B cell (primary cell): ENCODE measurements at regions of chr3 and their contacts with region 1.

Region 1: DNA sequence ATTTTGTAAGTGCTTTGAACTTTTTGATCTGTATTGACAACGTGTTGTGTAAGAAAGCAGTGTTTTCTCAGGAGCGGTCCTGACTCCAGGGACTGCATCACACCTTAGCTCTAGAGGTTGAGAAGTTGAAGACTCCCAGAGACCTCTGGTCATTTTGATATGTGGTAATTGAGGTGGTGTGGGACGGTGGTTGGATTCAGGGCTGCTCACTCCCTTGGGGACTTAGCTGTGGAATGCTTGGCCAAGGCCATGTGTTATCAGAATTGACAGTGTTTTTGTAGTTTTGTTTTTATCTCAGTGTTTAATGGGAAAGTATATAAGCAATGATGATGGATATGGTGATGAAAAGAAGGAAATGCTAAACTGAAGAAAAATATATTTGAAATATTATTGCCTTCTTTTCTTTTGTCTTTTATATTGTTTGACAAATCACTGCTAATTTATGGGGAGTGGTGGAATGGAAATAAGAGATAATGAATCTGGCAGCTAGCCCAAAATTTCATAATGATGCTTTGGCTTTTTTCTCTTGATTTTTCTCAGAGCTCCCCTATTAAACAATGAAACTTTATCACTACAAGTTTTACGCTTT is 16.0 kb downstream of the CMSS1 start:
- DNase-seq: no peak
- ATAC-seq: no peak
- H3K4me3 ChIP-seq: no peak overlapping the region
- H3K4me3 Mint-ChIP-seq: no peak overlapping the region
- H3K27ac ChIP-seq: no peak overlapping the region
- H3K27ac Mint-ChIP-seq: no peak overlapping the region
- H3K4me1 ChIP-seq: no peaks in the 10 kb centered on the region
- H3K4me1 Mint-ChIP-seq: no peaks in the 10 kb centered on the region
- H3K27me3 ChIP-seq: no peaks in the 10 kb centered on the region
- H3K27me3 Mint-ChIP-seq: no peaks in the 10 kb centered on the region
- CTCF ChIP-seq: no peak

Region 2: DNA sequence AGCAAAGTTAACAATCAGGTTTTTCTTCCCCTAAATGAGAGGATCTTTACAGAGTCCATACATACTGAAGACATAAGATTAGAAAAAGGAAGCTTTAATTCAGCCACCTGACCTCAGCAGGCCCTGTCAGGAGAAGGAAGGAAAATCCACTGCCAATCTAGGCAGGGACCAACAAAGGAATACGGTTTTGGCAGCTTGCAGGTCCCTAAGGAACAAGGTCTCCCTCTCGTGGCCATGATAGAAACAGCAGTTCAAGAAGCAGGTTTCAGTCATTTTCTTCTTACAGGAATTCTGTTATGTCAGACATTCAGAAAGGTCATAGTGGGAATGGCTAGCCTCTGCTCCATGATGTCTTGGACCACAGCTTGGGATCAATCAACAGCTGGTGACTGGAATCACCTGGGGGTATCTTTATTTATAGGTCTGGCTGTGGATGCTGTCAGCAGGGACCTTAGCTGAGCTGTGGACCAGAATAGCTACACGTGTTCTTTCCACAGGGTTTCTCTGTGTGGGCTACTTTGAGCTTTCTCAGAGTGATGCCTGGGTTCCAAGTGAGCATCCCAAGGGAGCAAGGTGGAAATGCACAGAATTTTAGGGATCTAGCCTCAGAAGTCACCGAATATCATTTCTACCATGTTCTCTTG is 25.4 kb before region 1 on chr3:
- CTCF ChIA-PET with region 1: interaction called, 12 read pairs
- POLR2A ChIA-PET with region 1: no interaction called
- intact Hi-C with region 1: no loop called
- DNase-seq: peak; percentile 64
- ATAC-seq: peak; percentile 41
- H3K4me3 ChIP-seq: no peak overlapping the region
- H3K4me3 Mint-ChIP-seq: no peak overlapping the region
- H3K27ac ChIP-seq: no peak overlapping the region
- H3K27ac Mint-ChIP-seq: no peak overlapping the region
- H3K4me1 ChIP-seq: no peaks in the 10 kb centered on the region
- H3K4me1 Mint-ChIP-seq: no peaks in the 10 kb centered on the region
- H3K27me3 ChIP-seq: no peaks in the 10 kb centered on the region
- H3K27me3 Mint-ChIP-seq: no peaks in the 10 kb centered on the region
- CTCF ChIP-seq: peak; percentile 90

Region 3: DNA sequence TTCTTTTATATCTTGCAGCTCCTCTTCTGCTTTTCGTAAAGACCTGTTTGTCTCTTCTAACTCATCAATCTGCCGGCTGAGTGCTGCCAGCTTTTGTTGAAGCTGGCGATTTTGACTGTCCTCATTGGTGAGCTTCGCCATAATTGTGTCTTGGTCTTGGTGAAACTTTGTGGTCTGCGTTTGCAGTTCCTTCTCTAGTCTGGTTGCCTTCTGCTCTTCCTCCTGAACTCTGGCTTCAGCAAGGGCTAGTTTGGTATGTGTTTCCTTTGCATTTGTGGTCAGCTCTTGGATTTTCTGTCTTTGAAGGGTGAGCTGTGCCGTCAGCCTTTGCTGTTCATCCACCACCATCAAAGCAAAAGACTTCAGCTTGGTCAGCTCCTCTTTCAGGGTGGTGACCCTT is 16.9 kb after region 1 on chr3:
- CTCF ChIA-PET with region 1: interaction called, 11 read pairs
- POLR2A ChIA-PET with region 1: no interaction called
- intact Hi-C with region 1: no loop called
- DNase-seq: no peak
- ATAC-seq: no peak
- H3K4me3 ChIP-seq: no peak overlapping the region
- H3K4me3 Mint-ChIP-seq: no peak overlapping the region
- H3K27ac ChIP-seq: no peak overlapping the region
- H3K27ac Mint-ChIP-seq: no peak overlapping the region
- H3K4me1 ChIP-seq: no peaks in the 10 kb centered on the region
- H3K4me1 Mint-ChIP-seq: peaks cover 4% of the 10 kb centered on the region
- H3K27me3 ChIP-seq: no peaks in the 10 kb centered on the region
- H3K27me3 Mint-ChIP-seq: no peaks in the 10 kb centered on the region
- CTCF ChIP-seq: no peak

Region 4: DNA sequence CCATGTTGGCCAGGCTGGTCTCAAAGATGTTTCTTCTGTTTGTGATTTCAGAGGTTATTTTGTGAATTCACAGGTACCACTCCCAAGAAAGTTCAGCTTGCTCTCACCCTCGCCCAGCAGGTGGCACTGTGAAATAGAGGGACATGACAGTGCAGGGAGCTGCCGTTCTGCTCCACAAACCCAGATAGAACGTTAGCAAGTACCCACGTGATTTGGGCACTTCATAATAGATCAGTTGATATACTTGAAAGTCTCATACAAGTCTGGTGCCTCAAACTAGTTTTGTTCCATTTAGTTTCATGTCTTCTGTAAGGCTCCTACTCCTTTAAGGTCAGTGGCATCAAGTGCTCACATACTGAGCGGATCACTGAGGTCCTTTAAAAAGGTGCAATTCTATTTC is 235.1 kb after region 1 on chr3:
- CTCF ChIA-PET with region 1: interaction called, 4 read pairs
- POLR2A ChIA-PET with region 1: interaction called, 5 read pairs
- intact Hi-C with region 1: loop called (anchors 5 kb)
- DNase-seq: peak; percentile 84
- ATAC-seq: peak; percentile 95
- H3K4me3 ChIP-seq: no peak overlapping the region
- H3K4me3 Mint-ChIP-seq: peak overlapping the region; percentile 53
- H3K27ac ChIP-seq: no peak overlapping the region
- H3K27ac Mint-ChIP-seq: peak overlapping the region; percentile 57
- H3K4me1 ChIP-seq: peaks cover 37% of the 10 kb centered on the region in 2 donors
- H3K4me1 Mint-ChIP-seq: peaks cover 42% of the 10 kb centered on the region
- H3K27me3 ChIP-seq: no peaks in the 10 kb centered on the region
- H3K27me3 Mint-ChIP-seq: no peaks in the 10 kb centered on the region
- CTCF ChIP-seq: peak; percentile 86

Region 5: DNA sequence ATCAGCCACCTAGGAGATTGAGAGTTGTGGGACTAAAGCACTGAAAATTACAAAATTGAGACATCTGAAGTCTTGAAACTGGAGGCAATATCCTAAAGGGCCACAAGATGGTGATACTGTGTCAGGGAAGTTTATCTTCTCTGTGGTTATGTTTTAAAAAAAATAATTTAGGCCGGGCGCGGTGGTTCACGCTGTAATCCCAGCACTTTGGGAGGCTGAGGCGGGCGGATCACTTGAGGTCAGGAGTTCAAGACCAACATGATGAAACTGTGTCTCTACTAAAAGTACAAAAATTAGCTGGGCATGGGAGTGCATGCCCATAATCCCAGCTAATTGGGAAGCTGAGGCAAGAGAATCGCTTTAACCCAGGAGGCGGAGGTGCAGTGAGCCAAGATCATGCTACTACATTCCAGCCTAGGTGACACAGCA is 482.9 kb after region 1 on chr3:
- CTCF ChIA-PET with region 1: interaction called, 3 read pairs
- POLR2A ChIA-PET with region 1: no interaction called
- intact Hi-C with region 1: loop called (anchors 5 kb)
- DNase-seq: peak; percentile 62
- ATAC-seq: peak; percentile 60
- H3K4me3 ChIP-seq: no peak overlapping the region
- H3K4me3 Mint-ChIP-seq: no peak overlapping the region
- H3K27ac ChIP-seq: no peak overlapping the region
- H3K27ac Mint-ChIP-seq: no peak overlapping the region
- H3K4me1 ChIP-seq: peaks cover 0 to 5% of the 10 kb centered on the region in 2 donors
- H3K4me1 Mint-ChIP-seq: no peaks in the 10 kb centered on the region
- H3K27me3 ChIP-seq: no peaks in the 10 kb centered on the region
- H3K27me3 Mint-ChIP-seq: no peaks in the 10 kb centered on the region
- CTCF ChIP-seq: peak; percentile 75